Activated CD4-positive, alpha-beta T cell treated with anti-CD3 and anti-CD28 coated beads for 36 hours (primary cell): ENCODE measurements at regions of chr12 and their contacts with region 1.

Region 1: GRCh38 chr12:51666696-51667095 is 75.7 kb downstream of the SCN8A start:
- DNase-seq: no peak
- ATAC-seq: no peak
- H3K4me3 Mint-ChIP-seq: no peak overlapping the region
- H3K27ac Mint-ChIP-seq: no peak overlapping the region
- H3K4me1 Mint-ChIP-seq: peaks cover 4% of the 10 kb centered on the region
- H3K27me3 Mint-ChIP-seq: no peaks in the 10 kb centered on the region

Region 2: GRCh38 chr12:51643951-51644350 is 22.7 kb before region 1 on chr12:
- CTCF ChIA-PET with region 1: no interaction called
- POLR2A ChIA-PET with region 1: no interaction called
- intact Hi-C with region 1: loop called in 1 of 2 experiments (anchors 2 kb)
- DNase-seq: no peak
- ATAC-seq: no peak
- H3K4me3 Mint-ChIP-seq: no peak overlapping the region
- H3K27ac Mint-ChIP-seq: no peak overlapping the region
- H3K4me1 Mint-ChIP-seq: no peaks in the 10 kb centered on the region
- H3K27me3 Mint-ChIP-seq: peaks cover 4% of the 10 kb centered on the region

Region 3: GRCh38 chr12:51814311-51815088 is 147.8 kb after region 1 on chr12:
- CTCF ChIA-PET with region 1: no interaction called
- POLR2A ChIA-PET with region 1: no interaction called
- intact Hi-C with region 1: no loop called
- DNase-seq: peak; percentile 85
- ATAC-seq: peak; percentile 90
- H3K4me3 Mint-ChIP-seq: peak overlapping the region; percentile 54
- H3K27ac Mint-ChIP-seq: peak overlapping the region; percentile 70
- H3K4me1 Mint-ChIP-seq: peaks cover 9% of the 10 kb centered on the region
- H3K27me3 Mint-ChIP-seq: no peaks in the 10 kb centered on the region